IMR-90 (cell line): ENCODE measurements at regions of chr1 and their contacts with region 1.

Region 1: DNA sequence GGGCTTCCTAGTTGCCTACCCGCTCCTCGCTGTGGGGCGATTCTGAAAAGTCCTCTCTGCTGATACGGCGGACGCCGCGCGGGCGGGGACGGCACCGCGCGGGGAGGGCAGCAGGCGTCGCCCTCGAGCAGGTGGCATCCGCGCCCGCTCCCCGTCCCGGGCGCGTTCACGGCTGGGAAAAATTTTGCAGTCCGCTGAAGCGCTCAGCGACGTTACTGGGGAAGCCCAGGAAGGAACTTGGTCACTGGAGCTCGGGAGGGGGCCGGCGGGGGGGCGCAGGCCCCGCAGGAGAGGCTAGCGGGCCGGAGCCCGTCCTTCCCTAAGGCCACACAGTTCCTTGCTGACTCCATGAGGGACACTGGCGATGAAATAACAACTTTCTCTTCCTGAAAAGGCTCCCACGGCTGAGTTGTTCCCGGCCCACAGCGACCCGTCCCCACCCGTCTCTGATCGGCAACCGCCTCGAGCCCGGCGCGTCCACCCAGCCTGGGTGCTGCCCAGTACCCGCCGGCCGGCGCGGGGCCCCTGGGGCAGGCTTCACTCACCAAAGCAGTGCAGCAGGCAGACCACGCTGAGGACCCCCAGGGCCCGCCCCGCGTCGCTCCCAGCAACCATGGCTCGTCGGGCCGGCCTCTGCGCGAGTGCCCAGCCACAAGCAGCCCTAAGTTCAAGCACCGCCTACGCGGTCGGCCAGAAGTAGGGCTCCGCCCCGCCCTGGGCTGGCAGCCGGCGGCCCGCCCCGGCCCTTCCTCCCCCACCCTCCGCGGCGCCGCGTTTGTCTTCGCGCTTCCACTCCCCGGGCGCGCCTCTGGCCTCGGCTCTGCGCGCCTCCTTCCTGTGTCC is at the start of gene CD58:
- DNase-seq: peak; percentile 63
- ATAC-seq: peak; percentile 95
- H3K4me3 ChIP-seq: peak within 1 kb of the TSS; percentile 80
- H3K27ac ChIP-seq: peak within 1 kb of the TSS; percentile 23; the same call in 1 of the 2 replicates
- H3K4me1 ChIP-seq: peaks cover 2% of the 10 kb centered on the region; the same call in 1 of the 2 replicates
- H3K27me3 ChIP-seq: peaks cover 10% of the 10 kb centered on the region
- CTCF ChIP-seq: peak; percentile 63
- POLR2A ChIP-seq: no peak; the same call in 1 of the 2 replicates
- RAD21 ChIP-seq: peak; percentile 27; the same call in 1 of the 2 replicates
- total RNA-seq, gene CD58: 5.4 and 6.4 TPM in 2 replicates

Region 2: GRCh38 chr1:116133696-116134650 is 436.6 kb before region 1 on chr1:
- CTCF ChIA-PET with region 1: no interaction called
- POLR2A ChIA-PET with region 1: no interaction called
- dilution Hi-C with region 1: no loop called
- in situ Hi-C with region 1: no loop called
- intact Hi-C with region 1: loop called (anchors 10 kb)
- DNase-seq: no peak
- ATAC-seq: no peak
- H3K4me3 ChIP-seq: no peak overlapping the region
- H3K27ac ChIP-seq: no peak overlapping the region
- H3K4me1 ChIP-seq: no peaks in the 10 kb centered on the region
- H3K27me3 ChIP-seq: peaks cover 26% of the 10 kb centered on the region
- CTCF ChIP-seq: 0 out of 2 replicates have a peak, but pooled peaks have one; percentile 16
- POLR2A ChIP-seq: no peak
- RAD21 ChIP-seq: no peak

Region 3: GRCh38 chr1:116586741-116587143 is 16.2 kb after region 1 on chr1:
- CTCF ChIA-PET with region 1: interaction called, 12 read pairs
- POLR2A ChIA-PET with region 1: no interaction called
- dilution Hi-C with region 1: no loop called
- in situ Hi-C with region 1: no loop called
- intact Hi-C with region 1: no loop called
- DNase-seq: no peak
- ATAC-seq: no peak
- H3K4me3 ChIP-seq: no peak overlapping the region
- H3K27ac ChIP-seq: no peak overlapping the region
- H3K4me1 ChIP-seq: no peaks in the 10 kb centered on the region
- H3K27me3 ChIP-seq: peaks cover 11% of the 10 kb centered on the region
- CTCF ChIP-seq: no peak
- POLR2A ChIP-seq: no peak
- RAD21 ChIP-seq: no peak

Region 4: GRCh38 chr1:117017648-117018047 is 447.1 kb after region 1 on chr1:
- CTCF ChIA-PET with region 1: no interaction called
- POLR2A ChIA-PET with region 1: no interaction called
- dilution Hi-C with region 1: no loop called
- in situ Hi-C with region 1: no loop called
- intact Hi-C with region 1: no loop called
- DNase-seq: no peak
- ATAC-seq: no peak
- H3K4me3 ChIP-seq: no peak overlapping the region
- H3K27ac ChIP-seq: no peak overlapping the region
- H3K4me1 ChIP-seq: no peaks in the 10 kb centered on the region
- H3K27me3 ChIP-seq: no peaks in the 10 kb centered on the region; the same call in 1 of the 2 replicates
- CTCF ChIP-seq: no peak
- POLR2A ChIP-seq: no peak
- RAD21 ChIP-seq: no peak